H1 (cell line): ENCODE measurements at regions of chr4 and their contacts with region 1.

Region 1: DNA sequence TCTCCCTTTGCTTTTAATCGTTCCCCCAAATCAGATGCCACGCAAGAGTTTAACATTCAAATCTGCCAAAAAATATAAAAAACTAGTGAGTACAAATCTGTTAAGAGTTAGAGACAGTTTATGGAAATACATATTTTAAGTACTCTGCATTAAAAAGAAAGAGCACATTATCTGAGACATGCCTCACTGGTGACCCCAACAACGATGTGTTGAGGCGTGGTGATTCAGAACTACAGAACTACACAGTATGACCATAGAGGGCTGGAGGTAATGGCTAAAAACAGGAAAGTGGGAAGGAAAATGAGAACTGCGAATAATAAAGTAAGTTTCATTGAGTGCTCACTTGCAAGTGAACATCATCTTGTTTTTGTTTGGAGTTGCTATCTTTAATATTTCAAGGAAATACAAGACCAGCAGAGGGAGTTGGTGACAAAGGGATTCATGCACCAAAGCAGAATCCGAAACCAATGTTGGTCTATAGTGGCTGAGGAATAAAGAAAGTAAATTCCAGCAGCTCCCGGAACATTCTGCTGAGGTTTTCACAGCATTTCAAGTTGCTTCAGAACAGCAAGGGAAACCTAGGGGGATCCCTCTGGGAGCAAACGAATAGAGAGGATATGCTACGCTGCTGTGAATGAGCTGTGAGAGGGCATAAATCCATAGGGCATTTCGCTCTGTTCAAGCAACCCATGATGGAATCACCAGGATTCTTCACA is 92.2 kb downstream of the DCHS2 start:
- DNase-seq: no peak
- H3K4me3 ChIP-seq: no peak overlapping the region
- H3K27ac ChIP-seq: no peak overlapping the region
- H3K4me1 ChIP-seq: no peaks in the 10 kb centered on the region
- H3K27me3 ChIP-seq: no peaks in the 10 kb centered on the region
- CTCF ChIP-seq: peak in 2 of 3 experiments; percentile 38 to 40; a peak in 2 of 4 replicates
- EP300 ChIP-seq: no peak
- POLR2A ChIP-seq: no peak
- RAD21 ChIP-seq: peak; percentile 59 to 66

Region 2: GRCh38 chr4:154384012-154384411 is 15.4 kb before region 1 on chr4:
- CTCF ChIA-PET with region 1: no interaction called
- POLR2A ChIA-PET with region 1: no interaction called
- DNase-seq: no peak
- H3K4me3 ChIP-seq: no peak overlapping the region
- H3K27ac ChIP-seq: no peak overlapping the region
- H3K4me1 ChIP-seq: no peaks in the 10 kb centered on the region; a peak in 1 of 7 replicates
- H3K27me3 ChIP-seq: no peaks in the 10 kb centered on the region
- CTCF ChIP-seq: no peak
- EP300 ChIP-seq: no peak
- POLR2A ChIP-seq: no peak
- RAD21 ChIP-seq: no peak

Region 3: GRCh38 chr4:154416190-154416547 is 16.8 kb after region 1 on chr4:
- CTCF ChIA-PET with region 1: interaction called, 16 read pairs
- POLR2A ChIA-PET with region 1: no interaction called
- DNase-seq: peak in 1 of 2 experiments; percentile 69
- H3K4me3 ChIP-seq: peak overlapping the region; percentile 69 to 90 (median 74); a peak in 7 of 8 replicates
- H3K27ac ChIP-seq: no peak overlapping the region
- H3K4me1 ChIP-seq: peaks cover 0 to 5% (median 0%) of the 10 kb centered on the region in 4 experiments; a peak in 1 of 7 replicates
- H3K27me3 ChIP-seq: peaks cover 0 to 14% (median 9%) of the 10 kb centered on the region in 4 experiments; a peak in 4 of 7 replicates
- CTCF ChIP-seq: peak in 2 of 3 experiments; percentile 35 to 47; a peak in 3 of 4 replicates
- EP300 ChIP-seq: no peak
- POLR2A ChIP-seq: no peak
- RAD21 ChIP-seq: peak in 1 of 2 experiments; percentile 15; a peak in 1 of 4 replicates

Region 4: DNA sequence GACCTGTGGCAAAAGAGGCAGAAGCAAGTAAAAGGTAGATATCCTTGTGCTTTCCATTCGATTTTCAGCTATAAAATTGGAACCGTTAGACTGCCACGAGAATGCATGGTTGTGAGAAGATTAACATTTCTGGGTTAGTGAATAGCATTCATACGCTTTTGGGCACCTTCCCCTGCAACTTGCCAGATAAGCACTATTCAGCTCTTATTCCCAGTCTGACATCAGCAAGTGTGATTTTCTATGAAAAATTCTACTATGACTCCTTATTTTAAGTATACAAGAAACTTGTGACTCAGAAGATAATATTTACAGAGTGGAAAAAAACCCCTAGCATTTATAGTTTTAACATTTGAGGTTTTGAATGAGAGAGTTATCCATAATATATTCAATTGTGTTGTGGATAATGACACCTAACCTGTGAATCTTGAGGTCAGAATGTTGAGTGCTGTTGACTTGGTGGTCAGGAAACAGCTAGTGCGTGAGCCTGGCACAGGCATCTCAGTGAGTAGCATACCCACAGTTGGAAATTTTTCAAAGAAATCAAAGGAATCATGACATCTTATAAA is 167.3 kb after region 1 on chr4:
- CTCF ChIA-PET with region 1: no interaction called
- POLR2A ChIA-PET with region 1: no interaction called
- DNase-seq: no peak
- H3K4me3 ChIP-seq: no peak overlapping the region
- H3K27ac ChIP-seq: no peak overlapping the region
- H3K4me1 ChIP-seq: no peaks in the 10 kb centered on the region
- H3K27me3 ChIP-seq: no peaks in the 10 kb centered on the region
- CTCF ChIP-seq: no peak
- EP300 ChIP-seq: no peak
- POLR2A ChIP-seq: no peak
- RAD21 ChIP-seq: no peak